ENCODE measurements at regions of chr12 and their contacts with region 1.

Region 1: GRCh38 chr12:123633379-123634141 is at the starts of genes EIF2B1 and GTF2H3:
- DNase-seq: peak; percentile 88 to 98 (median 96)
- ATAC-seq: peak; percentile 91 to 98 (median 96)
- H3K4me3 ChIP-seq: peak within 1 kb of the TSS; percentile 69 to 91
- H3K4me3 Mint-ChIP-seq: peak within 1 kb of the TSS; percentile 87 to 94 (median 90)
- H3K27ac ChIP-seq: peak within 1 kb of the TSS; percentile 80
- H3K27ac Mint-ChIP-seq: peak within 1 kb of the TSS; percentile 92 to 95
- H3K4me1 ChIP-seq: peaks cover 5 to 18% of the 10 kb centered on the region in 2 experiments
- H3K4me1 Mint-ChIP-seq: peaks cover 25 to 40% (median 26%) of the 10 kb centered on the region in 3 donors
- H3K27me3 ChIP-seq: no peaks in the 10 kb centered on the region
- H3K27me3 Mint-ChIP-seq: no peaks in the 10 kb centered on the region
- total RNA-seq, gene EIF2B1: 44.7 to 51.8 (median 47.0) TPM
- total RNA-seq, gene GTF2H3: 23.7 to 27.2 (median 24.9) TPM

Region 2: DNA sequence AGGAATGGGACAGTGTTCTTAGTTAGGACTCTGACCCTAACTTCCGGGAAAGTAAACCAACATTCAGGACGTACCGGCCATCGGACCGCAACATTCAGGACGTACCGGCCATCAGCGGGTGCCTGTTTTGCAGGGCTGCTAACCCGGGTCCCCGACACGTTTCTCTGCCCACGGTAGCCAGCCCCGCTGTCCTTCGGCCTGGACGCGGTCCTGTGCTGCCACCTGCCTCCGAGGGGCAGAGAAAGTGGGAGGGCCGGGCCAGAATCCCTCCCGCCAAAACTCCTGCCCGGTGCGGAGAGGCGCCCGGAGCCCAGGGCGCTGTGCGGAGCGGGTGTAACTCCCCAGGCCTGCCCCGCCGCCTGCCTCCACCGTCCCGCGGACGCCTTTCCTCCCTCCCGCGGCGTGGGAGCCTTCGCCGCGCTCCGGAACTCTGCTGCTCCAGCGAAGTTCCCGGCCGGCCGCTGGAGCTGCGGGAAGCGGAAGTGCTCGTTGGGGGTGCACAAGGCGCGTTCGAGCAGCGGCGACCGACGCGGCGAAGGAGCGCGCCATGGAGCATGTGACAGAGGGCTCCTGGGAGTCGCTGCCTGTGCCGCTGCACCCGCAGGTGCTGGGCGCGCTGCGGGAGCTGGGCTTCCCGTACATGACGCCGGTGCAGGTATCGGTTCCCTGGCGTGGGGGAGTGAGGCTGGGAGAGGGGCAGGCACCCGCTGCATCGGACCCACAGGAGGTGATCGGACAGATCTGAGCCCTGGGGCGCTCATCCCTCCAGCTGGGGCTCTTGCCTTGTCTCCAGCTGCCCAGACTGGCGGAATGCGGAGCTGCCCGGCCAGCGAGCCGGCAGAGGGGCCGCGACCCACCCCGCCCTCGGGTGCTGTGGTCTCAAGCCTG is 31.7 kb before region 1 on chr12 and contains the start of gene DDX55:
- CTCF ChIA-PET with region 1: no interaction called
- POLR2A ChIA-PET with region 1: no interaction called
- DNase-seq: peak; percentile 74 to 93 (median 83)
- ATAC-seq: peak; percentile 94 to 97 (median 96)
- H3K4me3 ChIP-seq: peak within 1 kb of the TSS; percentile 92 to 94
- H3K4me3 Mint-ChIP-seq: peak within 1 kb of the TSS; percentile 93 to 99 (median 97)
- H3K27ac ChIP-seq: peak within 1 kb of the TSS; percentile 82
- H3K27ac Mint-ChIP-seq: peak within 1 kb of the TSS; percentile 90 to 94
- H3K4me1 ChIP-seq: peaks cover 7 to 28% of the 10 kb centered on the region in 2 experiments
- H3K4me1 Mint-ChIP-seq: peaks cover 32 to 37% (median 37%) of the 10 kb centered on the region in 3 donors
- H3K27me3 ChIP-seq: no peaks in the 10 kb centered on the region
- H3K27me3 Mint-ChIP-seq: no peaks in the 10 kb centered on the region
- total RNA-seq, gene DDX55: 28.9 to 45.8 (median 41.8) TPM

Region 3: DNA sequence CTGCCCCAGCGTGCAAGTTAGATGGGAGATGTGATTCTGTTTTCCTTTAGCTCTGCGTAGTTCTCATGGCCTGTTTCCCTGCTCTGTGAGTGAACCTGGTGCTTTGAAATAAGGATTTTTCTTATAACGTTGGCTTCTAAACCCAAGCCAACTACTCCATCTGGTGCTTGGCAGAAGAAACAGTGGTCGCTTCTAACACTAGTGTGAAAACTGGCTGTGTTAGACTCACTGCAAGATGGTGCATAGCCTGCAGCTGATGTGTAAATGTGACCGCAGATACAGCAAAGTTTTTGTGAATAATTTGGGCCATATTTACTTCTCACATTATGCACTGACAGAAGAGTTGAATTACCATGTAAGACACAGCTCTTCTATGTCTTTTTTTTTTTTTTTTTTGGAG is 12.3 kb after region 1 on chr12:
- CTCF ChIA-PET with region 1: no interaction called
- POLR2A ChIA-PET with region 1: no interaction called
- DNase-seq: no peak
- ATAC-seq: no peak
- H3K4me3 ChIP-seq: no peak overlapping the region
- H3K4me3 Mint-ChIP-seq: no peak overlapping the region
- H3K27ac ChIP-seq: no peak overlapping the region
- H3K27ac Mint-ChIP-seq: no peak overlapping the region
- H3K4me1 ChIP-seq: no peaks in the 10 kb centered on the region
- H3K4me1 Mint-ChIP-seq: peaks cover 0 to 2% (median 0%) of the 10 kb centered on the region in 3 donors
- H3K27me3 ChIP-seq: no peaks in the 10 kb centered on the region
- H3K27me3 Mint-ChIP-seq: no peaks in the 10 kb centered on the region

Region 4: DNA sequence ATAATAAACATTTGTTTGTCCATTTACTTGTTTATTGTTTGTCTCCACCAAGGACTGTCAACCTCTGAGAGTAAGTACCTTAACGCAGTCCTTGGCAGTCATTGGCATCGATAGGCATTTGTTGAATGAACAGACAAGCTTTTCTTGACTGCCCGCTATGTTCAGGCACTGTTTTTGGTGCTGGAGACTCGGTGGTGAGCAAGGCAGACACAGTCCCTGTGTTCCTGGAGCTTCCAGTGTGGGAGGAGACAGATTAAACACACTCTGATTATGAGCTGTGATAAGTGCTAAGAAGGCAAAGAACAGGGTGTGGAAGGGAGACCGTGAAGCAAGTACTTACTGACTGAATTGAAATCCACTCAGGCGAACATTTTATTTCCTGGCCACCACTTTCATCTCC is 79.8 kb after region 1 on chr12:
- CTCF ChIA-PET with region 1: interaction called in 1 of 2 experiments, 18 read pairs
- POLR2A ChIA-PET with region 1: interaction called, 4 to 6 read pairs
- DNase-seq: no peak
- ATAC-seq: no peak
- H3K4me3 ChIP-seq: peak overlapping the region; percentile 90 to 94
- H3K4me3 Mint-ChIP-seq: peak overlapping the region; percentile 85 to 93 (median 91)
- H3K27ac ChIP-seq: no peak overlapping the region
- H3K27ac Mint-ChIP-seq: peak overlapping the region; percentile 53 to 80
- H3K4me1 ChIP-seq: peaks cover 10 to 31% of the 10 kb centered on the region in 2 experiments
- H3K4me1 Mint-ChIP-seq: peaks cover 36 to 39% (median 37%) of the 10 kb centered on the region in 3 donors
- H3K27me3 ChIP-seq: no peaks in the 10 kb centered on the region
- H3K27me3 Mint-ChIP-seq: no peaks in the 10 kb centered on the region